ENCODE measurements at regions of chr7 and their contacts with region 1.

Region 1: DNA sequence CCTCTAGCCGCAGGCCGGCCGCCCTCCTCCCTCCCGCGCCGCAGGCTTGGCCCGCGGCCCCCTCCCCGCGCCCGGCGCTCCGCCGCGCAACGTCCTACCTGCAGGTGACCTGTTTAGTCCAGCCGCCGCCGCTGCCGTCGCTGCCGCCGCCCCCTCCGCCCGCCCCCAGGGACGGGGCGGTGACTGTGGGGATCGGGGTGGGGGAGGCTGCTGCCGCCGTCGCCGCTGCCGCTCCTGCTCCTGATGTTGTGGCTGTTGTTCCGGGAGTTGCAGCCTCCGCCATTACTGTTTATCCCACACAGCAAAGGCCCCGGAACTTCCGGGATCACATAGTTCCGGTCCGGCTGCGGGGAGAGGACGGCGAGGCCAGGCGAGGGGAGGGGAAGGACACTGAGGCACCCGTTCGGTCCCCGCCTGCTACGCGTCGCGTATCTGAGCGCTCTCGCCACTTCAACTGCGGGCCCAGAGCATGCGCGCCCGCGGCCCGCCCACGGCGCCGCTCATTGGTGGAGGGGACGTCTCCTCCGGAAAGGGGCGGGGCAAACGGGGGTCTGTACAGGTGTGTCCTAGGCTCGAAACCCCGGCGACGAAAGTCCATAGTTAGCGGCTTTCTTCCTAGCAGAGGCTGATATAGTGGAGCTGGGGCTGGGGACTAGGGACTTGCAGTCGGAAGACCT is at the start of gene MKRN1:
- DNase-seq: peak; percentile 92
- ATAC-seq: peak; percentile 89
- H3K4me3 Mint-ChIP-seq: peak within 1 kb of the TSS; percentile 100
- H3K27ac Mint-ChIP-seq: peak within 1 kb of the TSS; percentile 99
- H3K4me1 Mint-ChIP-seq: peaks cover 30% of the 10 kb centered on the region
- H3K27me3 Mint-ChIP-seq: no peaks in the 10 kb centered on the region
- CTCF ChIP-seq: no peak
- total RNA-seq, gene MKRN1: 94.3 and 99.9 TPM in 2 replicates

Region 2: DNA sequence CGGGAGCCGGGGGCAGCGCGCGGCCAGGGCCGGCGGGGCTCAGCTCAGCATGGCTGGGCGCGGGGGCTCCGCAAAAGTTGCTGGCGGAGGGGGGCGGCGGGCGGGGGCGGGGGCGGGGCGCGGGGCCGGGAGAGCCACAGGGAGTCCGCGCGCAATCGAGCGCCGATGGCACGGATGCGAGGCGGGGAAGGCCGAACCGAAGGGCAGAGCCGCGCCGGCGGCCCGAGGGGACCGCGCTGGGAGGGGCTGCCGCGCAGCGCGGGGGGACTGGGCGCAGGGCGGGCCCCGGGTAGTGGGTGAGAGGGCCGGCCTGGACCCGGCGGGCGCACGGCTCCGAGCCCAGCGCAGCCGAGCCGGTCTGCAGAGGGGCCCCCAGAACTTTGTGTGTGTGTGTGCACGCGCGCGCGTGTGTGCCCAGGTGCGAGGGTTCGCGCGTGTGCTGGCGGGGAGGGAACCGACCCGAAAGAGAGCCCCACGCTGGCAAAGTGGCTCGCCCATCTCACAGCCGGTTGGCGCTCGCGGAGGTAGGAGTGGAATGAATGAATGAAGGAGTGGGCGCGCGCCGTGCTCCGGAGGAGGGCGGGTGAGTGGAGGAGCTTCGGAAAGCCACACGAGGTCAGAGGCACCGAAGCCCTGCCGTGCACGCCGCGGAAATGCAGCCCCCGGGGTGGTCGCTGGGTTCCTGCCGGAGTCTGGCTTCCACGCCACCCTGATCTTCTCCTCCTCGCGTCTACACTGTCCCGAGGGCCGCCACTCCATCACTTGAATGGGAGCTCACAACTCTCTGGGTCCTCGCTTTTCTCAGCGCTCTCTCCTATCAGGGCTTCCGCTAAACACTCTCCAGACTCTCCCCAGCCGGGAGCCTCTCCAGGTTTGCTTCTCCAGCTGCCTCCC is 701.0 kb before region 1 on chr7 and contains the start of gene HIPK2:
- CTCF ChIA-PET with region 1: no interaction called
- POLR2A ChIA-PET with region 1: no interaction called
- intact Hi-C with region 1: loop called (anchors 10 kb)
- DNase-seq: peak; percentile 71
- ATAC-seq: peak; percentile 81
- H3K4me3 Mint-ChIP-seq: peak within 1 kb of the TSS; percentile 99
- H3K27ac Mint-ChIP-seq: peak within 1 kb of the TSS; percentile 94
- H3K4me1 Mint-ChIP-seq: peaks cover 39% of the 10 kb centered on the region
- H3K27me3 Mint-ChIP-seq: peaks cover 3% of the 10 kb centered on the region
- CTCF ChIP-seq: no peak
- total RNA-seq, gene HIPK2: 21.1 and 23.0 TPM in 2 replicates

Region 3: DNA sequence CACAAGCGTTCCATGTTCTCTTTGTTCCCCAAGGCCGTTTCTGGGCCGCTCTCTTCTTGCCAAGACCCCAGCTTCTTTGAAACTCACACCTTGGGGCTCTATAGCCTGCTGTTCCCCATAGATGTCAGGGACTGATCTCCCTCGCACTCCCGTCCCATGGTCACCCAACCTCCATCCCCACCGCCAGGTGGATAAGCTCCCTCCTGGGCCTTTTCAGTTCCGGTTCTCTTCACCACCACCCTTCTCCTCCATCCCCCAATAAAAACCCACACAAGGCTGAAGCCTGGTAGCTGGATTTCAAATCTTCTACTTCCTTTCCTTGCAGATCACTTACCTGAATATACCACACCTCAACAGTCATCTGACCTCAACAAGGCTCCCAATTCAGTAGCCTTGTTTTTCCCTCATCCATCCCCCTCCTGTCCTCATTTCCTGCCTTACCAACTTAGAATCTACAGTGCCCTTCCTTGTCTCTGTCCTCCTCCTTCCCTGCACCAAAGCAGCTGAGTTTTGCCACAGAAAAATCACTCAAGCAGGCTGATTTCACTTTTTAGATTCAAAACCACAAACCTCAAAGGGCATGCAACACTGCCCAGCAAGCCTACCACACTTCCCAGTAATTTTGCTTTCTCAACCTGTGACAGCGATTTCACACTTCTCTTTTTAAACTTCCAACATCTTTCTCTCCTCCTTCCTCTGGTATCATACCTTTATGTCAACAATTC is 88.6 kb before region 1 on chr7:
- CTCF ChIA-PET with region 1: no interaction called
- POLR2A ChIA-PET with region 1: no interaction called
- intact Hi-C with region 1: loop called (anchors 2 kb)
- DNase-seq: peak; percentile 32
- ATAC-seq: peak; percentile 88
- H3K4me3 Mint-ChIP-seq: no peak overlapping the region
- H3K27ac Mint-ChIP-seq: no peak overlapping the region
- H3K4me1 Mint-ChIP-seq: no peaks in the 10 kb centered on the region
- H3K27me3 Mint-ChIP-seq: no peaks in the 10 kb centered on the region
- CTCF ChIP-seq: no peak

Region 4: GRCh38 chr7:140506788-140507464 is 27.7 kb after region 1 on chr7:
- CTCF ChIA-PET with region 1: no interaction called
- POLR2A ChIA-PET with region 1: no interaction called
- intact Hi-C with region 1: no loop called
- DNase-seq: no peak
- ATAC-seq: no peak
- H3K4me3 Mint-ChIP-seq: no peak overlapping the region
- H3K27ac Mint-ChIP-seq: no peak overlapping the region
- H3K4me1 Mint-ChIP-seq: no peaks in the 10 kb centered on the region
- H3K27me3 Mint-ChIP-seq: peaks cover 5% of the 10 kb centered on the region
- CTCF ChIP-seq: no peak

Region 5: DNA sequence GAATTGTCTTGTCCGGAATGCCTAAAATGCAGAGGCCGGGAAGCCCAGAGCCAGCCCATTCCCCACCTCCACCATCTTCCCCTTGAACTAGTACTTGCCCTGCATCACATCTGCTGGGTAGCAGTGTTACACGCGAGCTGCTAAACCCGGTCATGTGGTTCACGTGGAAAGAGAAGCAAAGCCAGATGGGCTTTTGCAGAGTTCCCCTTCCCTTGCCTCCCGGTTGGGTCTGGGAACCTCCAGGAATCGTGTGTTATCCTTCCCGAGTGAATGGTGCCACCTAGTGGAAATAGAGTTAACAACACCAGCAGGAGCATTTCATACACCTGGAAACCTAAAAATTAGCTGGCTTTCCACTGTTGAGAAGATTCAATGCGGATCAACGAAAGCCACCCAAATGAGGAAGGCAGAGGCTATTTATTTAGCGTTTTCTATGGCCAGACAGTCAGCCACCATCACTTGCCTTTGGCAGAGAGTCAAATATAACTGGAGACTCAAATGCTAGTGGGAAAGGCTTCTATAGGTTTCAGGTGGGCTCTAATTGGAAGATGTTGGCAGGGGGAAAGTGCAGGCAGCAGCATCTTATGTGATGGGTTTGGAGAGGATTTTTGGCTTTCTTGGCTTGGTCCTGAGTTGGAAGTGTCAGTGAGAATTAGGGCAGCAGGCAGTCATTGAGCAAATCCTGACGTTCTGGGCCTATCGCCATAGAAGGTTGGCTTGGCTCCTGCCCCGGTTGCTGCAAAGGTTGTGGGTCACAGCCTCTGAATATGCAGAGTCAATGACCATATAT is 174.3 kb after region 1 on chr7:
- CTCF ChIA-PET with region 1: interaction called, 4 read pairs
- POLR2A ChIA-PET with region 1: interaction called, 4 read pairs
- intact Hi-C with region 1: loop called (anchors 1 kb)
- DNase-seq: peak; percentile 28
- ATAC-seq: no peak
- H3K4me3 Mint-ChIP-seq: no peak overlapping the region
- H3K27ac Mint-ChIP-seq: no peak overlapping the region
- H3K4me1 Mint-ChIP-seq: peaks cover 20% of the 10 kb centered on the region
- H3K27me3 Mint-ChIP-seq: peaks cover 2% of the 10 kb centered on the region
- CTCF ChIP-seq: peak; percentile 31

Region 6: GRCh38 chr7:140810830-140811556 is 331.8 kb after region 1 on chr7:
- CTCF ChIA-PET with region 1: no interaction called
- POLR2A ChIA-PET with region 1: no interaction called
- intact Hi-C with region 1: loop called (anchors 10 kb)
- DNase-seq: peak; percentile 30
- ATAC-seq: peak; percentile 84
- H3K4me3 Mint-ChIP-seq: no peak overlapping the region
- H3K27ac Mint-ChIP-seq: peak overlapping the region; percentile 59
- H3K4me1 Mint-ChIP-seq: peaks cover 1% of the 10 kb centered on the region
- H3K27me3 Mint-ChIP-seq: no peaks in the 10 kb centered on the region
- CTCF ChIP-seq: no peak

Region 7: DNA sequence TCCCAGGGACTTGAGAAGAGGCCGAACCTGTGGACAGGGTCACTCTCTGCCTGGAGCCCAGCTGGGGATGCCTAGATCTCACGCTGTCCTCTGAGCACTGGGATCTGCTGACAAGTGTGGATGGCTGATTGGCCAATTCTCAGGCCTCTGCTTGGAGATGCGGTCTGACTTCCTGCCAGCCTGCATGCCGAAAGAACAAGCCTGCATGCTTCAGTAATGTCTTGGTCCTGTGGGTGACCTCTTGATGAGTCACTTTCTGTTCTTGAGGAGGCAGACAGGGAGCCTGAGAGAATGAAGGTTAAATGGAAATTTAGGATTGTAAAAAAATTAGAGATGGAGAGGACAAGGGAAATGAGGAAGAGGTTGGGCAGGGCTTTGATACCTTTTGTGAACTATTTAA is 679.4 kb after region 1 on chr7:
- CTCF ChIA-PET with region 1: no interaction called
- POLR2A ChIA-PET with region 1: no interaction called
- intact Hi-C with region 1: no loop called
- DNase-seq: no peak
- ATAC-seq: no peak
- H3K4me3 Mint-ChIP-seq: no peak overlapping the region
- H3K27ac Mint-ChIP-seq: no peak overlapping the region
- H3K4me1 Mint-ChIP-seq: peaks cover 9% of the 10 kb centered on the region
- H3K27me3 Mint-ChIP-seq: peaks cover 6% of the 10 kb centered on the region
- CTCF ChIP-seq: no peak

Region 8: DNA sequence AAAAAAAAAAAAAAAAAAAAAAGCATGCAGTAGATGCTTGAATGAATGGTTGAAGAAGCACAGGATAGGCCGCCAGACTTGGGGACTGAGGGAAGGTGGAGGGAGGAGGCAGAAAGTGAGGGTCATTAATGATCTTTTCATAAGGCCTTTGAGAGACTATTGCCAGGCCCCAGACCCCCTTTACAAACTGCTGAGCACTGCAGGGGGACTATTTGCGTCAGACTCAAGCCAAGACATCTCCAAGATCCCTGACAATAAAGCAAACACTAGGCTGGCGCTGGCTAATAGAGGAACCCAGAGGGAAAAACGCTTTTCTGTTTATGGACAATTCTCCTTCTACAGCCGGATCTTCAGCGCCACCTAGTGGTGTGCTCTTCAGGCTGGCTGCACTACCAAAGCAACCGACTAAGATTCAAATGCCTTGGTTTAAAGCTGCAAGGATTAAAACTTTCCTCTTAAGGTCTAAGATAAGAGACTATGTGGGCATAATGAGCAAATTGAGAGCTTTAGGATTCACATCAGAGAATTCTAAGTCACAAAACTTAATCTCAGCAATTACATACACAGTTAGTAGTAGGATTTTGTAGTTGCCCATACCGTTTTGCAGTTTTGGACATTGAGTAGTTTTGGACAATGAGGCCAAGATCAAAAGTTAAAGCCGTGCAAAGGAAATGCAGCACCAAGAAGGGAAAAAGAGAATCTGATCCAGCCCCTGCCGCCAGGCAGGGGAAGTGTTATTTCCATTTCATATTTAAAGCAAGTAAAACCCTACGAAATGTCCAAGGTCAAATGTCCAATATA is 1054.1 kb after region 1 on chr7:
- CTCF ChIA-PET with region 1: no interaction called
- POLR2A ChIA-PET with region 1: no interaction called
- intact Hi-C with region 1: loop called (anchors 5 kb)
- DNase-seq: peak; percentile 29
- ATAC-seq: peak; percentile 45
- H3K4me3 Mint-ChIP-seq: no peak overlapping the region
- H3K27ac Mint-ChIP-seq: no peak overlapping the region
- H3K4me1 Mint-ChIP-seq: no peaks in the 10 kb centered on the region
- H3K27me3 Mint-ChIP-seq: peaks cover 23% of the 10 kb centered on the region
- CTCF ChIP-seq: peak; percentile 54